GM12878 (cell line): ENCODE measurements at regions of chr15 and their contacts with region 1.

Region 1: DNA sequence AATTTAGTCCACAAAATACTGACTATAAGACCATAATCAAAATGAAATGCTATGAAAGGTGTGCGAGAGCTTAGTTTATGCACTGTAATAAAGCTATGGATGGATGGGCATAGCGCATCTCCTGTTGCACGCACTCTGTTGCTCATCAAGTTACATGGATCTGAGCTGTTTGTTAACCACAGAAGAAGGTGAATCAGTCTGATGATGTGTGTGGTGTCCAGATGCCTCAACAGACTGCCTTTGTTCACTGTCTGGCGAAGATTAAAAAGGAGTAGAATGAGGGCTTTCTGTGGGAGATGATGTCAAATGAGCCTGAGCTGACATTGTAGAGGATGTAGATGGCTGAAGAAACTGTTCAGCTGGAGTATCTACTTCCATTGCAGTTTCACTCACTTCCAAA is 36.1 kb downstream of the NSMCE3 start:
- DNase-seq: no peak
- ATAC-seq: no peak
- H3K4me3 ChIP-seq: no peak overlapping the region
- H3K27ac ChIP-seq: no peak overlapping the region
- H3K4me1 ChIP-seq: no peaks in the 10 kb centered on the region
- H3K27me3 ChIP-seq: no peaks in the 10 kb centered on the region
- CTCF ChIP-seq: no peak
- EP300 ChIP-seq: no peak
- POLR2A ChIP-seq: no peak
- RAD21 ChIP-seq: no peak

Region 2: GRCh38 chr15:29291067-29291845 is 57.7 kb after region 1 on chr15:
- CTCF ChIA-PET with region 1: no interaction called
- POLR2A ChIA-PET with region 1: no interaction called
- RAD21 ChIA-PET with region 1: no interaction called
- SMC1A ChIA-PET with region 1: no interaction called
- in situ Hi-C with region 1: no loop called
- intact Hi-C with region 1: loop called (anchors 10 kb)
- DNase-seq: no peak
- ATAC-seq: no peak
- H3K4me3 ChIP-seq: no peak overlapping the region
- H3K27ac ChIP-seq: no peak overlapping the region
- H3K4me1 ChIP-seq: no peaks in the 10 kb centered on the region
- H3K27me3 ChIP-seq: no peaks in the 10 kb centered on the region
- CTCF ChIP-seq: no peak
- EP300 ChIP-seq: no peak
- POLR2A ChIP-seq: no peak
- RAD21 ChIP-seq: no peak